K562 (cell line): ENCODE measurements at regions of chr5 and their contacts with region 1.

Region 1: GRCh38 chr5:75236322-75237316 is at the start of gene ANKRD31:
- DNase-seq: peak; percentile 91 to 96 (median 94)
- ATAC-seq: peak; percentile 99
- H3K4me3 ChIP-seq: peak within 1 kb of the TSS; percentile 84
- H3K27ac ChIP-seq: peak within 1 kb of the TSS; percentile 62
- H3K4me1 ChIP-seq: peaks cover 6 to 12% of the 10 kb centered on the region in 2 experiments; a peak in 4 of 5 replicates
- H3K27me3 ChIP-seq: no peaks in the 10 kb centered on the region; a peak in 1 of 5 replicates
- CTCF ChIP-seq: peak; percentile 66 to 87 (median 82)
- EP300 ChIP-seq: peak; percentile 23
- POLR2A ChIP-seq: peak; percentile 72
- RAD21 ChIP-seq: peak; percentile 79 to 85
- polyA plus RNA-seq, gene ANKRD31: 0.03 to 0.04 TPM

Region 2: GRCh38 chr5:74684900-74685851 is 551.4 kb before region 1 on chr5 and contains the start of gene HEXB:
- CTCF ChIA-PET with region 1: no interaction called
- POLR2A ChIA-PET with region 1: no interaction called
- in situ Hi-C with region 1: no loop called
- intact Hi-C with region 1: loop called (anchors 10 kb)
- DNase-seq: peak; percentile 91 to 93 (median 92)
- ATAC-seq: peak; percentile 97
- H3K4me3 ChIP-seq: peak within 1 kb of the TSS; percentile 95
- H3K27ac ChIP-seq: peak within 1 kb of the TSS; percentile 90
- H3K4me1 ChIP-seq: peaks cover 19 to 23% of the 10 kb centered on the region in 2 experiments
- H3K27me3 ChIP-seq: no peaks in the 10 kb centered on the region
- CTCF ChIP-seq: peak in 1 of 3 experiments; percentile 40; a peak in 3 of 6 replicates
- EP300 ChIP-seq: peak; percentile 8; the same call in 1 of the 2 replicates
- POLR2A ChIP-seq: peak; percentile 95
- RAD21 ChIP-seq: no peak
- polyA plus RNA-seq, gene HEXB: 22.9 to 37.1 TPM

Region 3: DNA sequence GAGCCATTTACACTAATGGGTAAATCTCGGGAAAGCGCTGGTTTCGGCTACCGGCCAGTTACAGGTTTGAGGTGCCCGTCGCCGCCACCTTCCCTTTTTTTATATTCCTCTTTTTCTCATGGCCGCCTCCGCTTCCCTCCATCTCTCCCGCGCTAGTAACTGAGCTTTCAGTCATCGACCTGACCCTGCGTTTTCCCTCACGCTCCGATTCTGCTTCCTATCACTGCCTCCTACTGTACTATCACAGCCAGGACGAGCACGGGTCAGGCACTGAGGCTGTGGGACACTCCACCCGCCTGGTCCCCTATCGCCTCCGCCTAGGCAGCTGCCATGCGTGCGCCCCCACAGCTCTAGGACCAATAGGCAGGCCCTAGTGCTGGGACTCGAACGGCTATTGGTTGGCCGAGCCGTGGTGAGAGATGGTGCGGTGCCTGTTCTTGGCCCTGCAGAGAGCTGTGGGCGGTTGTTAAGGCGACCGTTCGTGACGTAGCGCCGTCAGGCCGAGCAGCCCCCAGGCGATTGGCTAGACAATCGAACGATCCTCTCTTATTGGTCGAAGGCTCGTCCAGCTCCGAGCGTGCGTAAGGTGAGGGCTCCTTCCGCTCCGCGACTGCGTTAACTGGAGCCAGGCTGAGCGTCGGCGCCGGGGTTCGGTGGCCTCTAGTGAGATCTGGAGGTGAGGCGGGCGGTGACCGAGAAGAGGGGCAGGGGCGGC is 100.2 kb after region 1 on chr5 and contains the start of gene HMGCR:
- CTCF ChIA-PET with region 1: no interaction called
- POLR2A ChIA-PET with region 1: no interaction called
- in situ Hi-C with region 1: no loop called
- intact Hi-C with region 1: loop called (anchors 2 kb)
- DNase-seq: peak; percentile 93 to 99 (median 94)
- ATAC-seq: peak; percentile 98
- H3K4me3 ChIP-seq: peak within 1 kb of the TSS; percentile 96
- H3K27ac ChIP-seq: peak within 1 kb of the TSS; percentile 82
- H3K4me1 ChIP-seq: peaks cover 13 to 14% of the 10 kb centered on the region in 2 experiments; a peak in 3 of 5 replicates
- H3K27me3 ChIP-seq: no peaks in the 10 kb centered on the region
- CTCF ChIP-seq: peak; percentile 61 to 75 (median 65); a peak in 5 of 6 replicates
- EP300 ChIP-seq: peak; percentile 55; the same call in 1 of the 2 replicates
- POLR2A ChIP-seq: peak; percentile 88
- RAD21 ChIP-seq: peak; percentile 40 to 54
- polyA plus RNA-seq, gene HMGCR: 29.5 to 58.5 TPM

Region 4: DNA sequence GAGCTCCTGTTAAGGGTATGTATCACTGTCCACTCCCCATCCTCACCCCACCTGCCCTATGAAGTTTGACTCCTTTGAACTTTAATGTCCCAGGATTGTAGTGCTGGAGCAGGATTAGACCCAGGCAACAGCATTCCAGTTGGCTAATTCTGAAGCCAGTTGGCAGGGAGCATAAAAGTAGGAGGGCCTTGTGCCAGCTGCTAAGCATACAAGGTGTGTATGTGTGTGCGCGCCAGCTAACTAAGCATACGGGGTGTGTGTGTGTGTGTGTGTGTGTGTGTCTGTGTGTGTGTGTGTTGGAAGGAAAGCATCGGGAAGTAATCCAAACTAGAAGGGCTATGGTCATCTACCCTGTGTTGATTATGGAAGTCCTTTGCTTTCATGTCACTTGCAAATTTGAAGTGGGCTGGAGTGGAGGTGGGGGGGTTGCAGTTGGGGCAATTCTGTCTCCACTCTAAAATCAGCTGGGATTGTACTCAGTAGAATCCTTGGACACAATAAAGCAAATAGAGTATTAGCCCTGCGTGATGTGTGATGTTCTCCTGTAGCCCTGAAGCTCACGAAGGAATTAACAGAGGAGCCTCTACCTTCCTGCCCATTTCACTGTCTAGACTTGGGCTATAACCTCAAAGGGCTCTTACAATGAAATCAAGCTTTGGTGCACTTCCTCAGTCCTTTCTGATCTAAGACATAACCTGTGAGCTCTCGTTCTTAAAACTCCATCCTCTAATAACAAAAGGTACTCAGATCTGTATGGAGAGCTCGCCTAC is 127.3 kb after region 1 on chr5:
- CTCF ChIA-PET with region 1: no interaction called
- POLR2A ChIA-PET with region 1: no interaction called
- in situ Hi-C with region 1: no loop called
- intact Hi-C with region 1: no loop called
- DNase-seq: peak in 1 of 4 experiments; percentile 4
- ATAC-seq: peak; percentile 10; the same call in 1 of the 3 replicates
- H3K4me3 ChIP-seq: no peak overlapping the region
- H3K27ac ChIP-seq: no peak overlapping the region
- H3K4me1 ChIP-seq: peaks cover 0 to 3% of the 10 kb centered on the region in 2 experiments; a peak in 1 of 5 replicates
- H3K27me3 ChIP-seq: no peaks in the 10 kb centered on the region
- CTCF ChIP-seq: no peak
- EP300 ChIP-seq: no peak
- POLR2A ChIP-seq: peak; percentile 68
- RAD21 ChIP-seq: no peak

Region 5: DNA sequence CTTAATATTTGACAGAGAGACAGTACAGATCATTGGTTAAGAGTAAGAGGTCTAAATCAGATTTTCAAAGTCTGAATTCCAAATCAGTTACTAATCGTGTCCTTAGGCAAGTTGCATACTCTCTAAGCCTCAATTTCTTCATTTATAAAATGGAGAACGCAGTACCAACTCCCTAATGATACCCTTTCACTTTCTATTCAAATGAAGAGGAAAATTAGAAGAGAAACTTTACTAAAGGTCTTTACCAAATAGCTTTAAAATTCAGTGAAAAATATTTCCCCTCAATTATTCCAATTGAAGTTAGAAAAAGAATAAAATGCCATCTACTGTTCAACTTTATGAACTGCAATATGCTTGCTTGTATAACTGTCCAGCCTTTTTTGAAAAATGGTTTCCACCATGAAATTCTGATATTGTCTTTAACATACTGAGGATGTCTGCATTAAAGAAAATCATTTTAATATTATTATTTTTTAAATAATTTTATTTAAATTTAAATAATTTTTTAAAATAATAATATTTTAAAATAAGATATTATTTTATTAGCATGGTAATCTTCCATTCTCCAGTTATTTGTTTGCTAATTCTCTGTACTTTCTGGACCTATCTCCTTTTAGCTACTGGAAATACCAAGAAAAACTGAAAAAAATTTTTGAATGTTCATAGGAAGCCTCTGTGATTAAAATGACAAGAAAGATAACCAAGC is 444.7 kb after region 1 on chr5:
- CTCF ChIA-PET with region 1: interaction called, 7 read pairs
- POLR2A ChIA-PET with region 1: no interaction called
- in situ Hi-C with region 1: no loop called
- intact Hi-C with region 1: loop called (anchors 2 kb)
- DNase-seq: peak in 1 of 4 experiments; percentile 53
- ATAC-seq: peak; percentile 53; the same call in 1 of the 3 replicates
- H3K4me3 ChIP-seq: no peak overlapping the region
- H3K27ac ChIP-seq: no peak overlapping the region
- H3K4me1 ChIP-seq: no peaks in the 10 kb centered on the region
- H3K27me3 ChIP-seq: no peaks in the 10 kb centered on the region
- CTCF ChIP-seq: peak in 2 of 3 experiments; percentile 32 to 68; a peak in 4 of 6 replicates
- EP300 ChIP-seq: no peak
- POLR2A ChIP-seq: no peak
- RAD21 ChIP-seq: peak; percentile 67 to 70